ENCODE measurements at regions of chr9 and their contacts with region 1.

Region 1: GRCh38 chr9:6703898-6704639 is 53.7 kb upstream of the KDM4C start:
- DNase-seq: peak in 41 of 42 donors; percentile 65 to 97 (median 92)

Region 2: DNA sequence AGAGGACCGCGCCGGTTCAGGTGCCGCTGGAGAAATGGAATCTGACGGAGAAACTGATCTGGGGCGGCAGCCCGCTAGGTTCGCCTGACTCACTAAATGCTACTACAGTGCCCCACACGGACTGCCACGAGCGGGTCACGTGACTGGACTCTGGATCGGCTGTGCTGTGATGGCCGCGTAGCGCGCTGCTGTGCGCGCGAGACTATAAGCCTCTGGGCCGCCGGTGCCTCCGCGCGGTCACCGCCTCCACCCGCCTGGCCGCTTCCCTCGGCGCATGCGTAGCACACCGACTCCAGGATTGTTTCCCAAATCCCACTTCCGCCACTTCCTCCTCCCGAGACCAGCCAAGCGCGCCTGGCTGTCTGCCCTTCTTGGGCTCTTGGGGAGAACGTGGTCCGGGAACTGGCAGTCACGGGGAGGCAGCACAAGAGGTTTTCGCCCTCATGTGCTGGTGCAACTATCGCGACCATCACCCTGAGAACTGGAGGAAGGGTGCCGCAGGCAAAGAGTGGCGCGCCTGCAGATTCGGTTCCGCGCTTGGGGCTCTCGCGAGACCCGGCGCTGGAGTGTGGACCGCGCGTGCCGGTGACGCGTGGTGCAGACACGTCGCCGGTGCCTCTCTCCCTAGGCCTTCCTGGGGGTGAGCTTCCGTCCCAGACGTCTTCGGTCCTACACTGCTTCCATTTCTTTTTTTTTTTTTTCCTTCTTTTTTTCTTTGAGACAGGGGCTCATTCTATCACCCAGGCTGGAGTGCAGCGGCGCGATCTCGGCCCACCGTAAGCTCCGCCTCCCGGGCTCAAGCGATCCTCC is 22.7 kb before region 1 on chr9:
- intact Hi-C with region 1: loop called (anchors 2 kb)
- DNase-seq: peak; percentile 93 to 98 (median 97)

Region 3: GRCh38 chr9:6757456-6758247 is 53.6 kb after region 1 on chr9 and contains the start of gene KDM4C:
- intact Hi-C with region 1: loop called (anchors 10 kb)
- DNase-seq: peak; percentile 89 to 98 (median 95)

Measured in head of caudate nucleus (tissue), 42 donors.